Naive thymus-derived CD4-positive, alpha-beta T cell (primary cell): ENCODE measurements at regions of chr12 and their contacts with region 1.

Region 1: DNA sequence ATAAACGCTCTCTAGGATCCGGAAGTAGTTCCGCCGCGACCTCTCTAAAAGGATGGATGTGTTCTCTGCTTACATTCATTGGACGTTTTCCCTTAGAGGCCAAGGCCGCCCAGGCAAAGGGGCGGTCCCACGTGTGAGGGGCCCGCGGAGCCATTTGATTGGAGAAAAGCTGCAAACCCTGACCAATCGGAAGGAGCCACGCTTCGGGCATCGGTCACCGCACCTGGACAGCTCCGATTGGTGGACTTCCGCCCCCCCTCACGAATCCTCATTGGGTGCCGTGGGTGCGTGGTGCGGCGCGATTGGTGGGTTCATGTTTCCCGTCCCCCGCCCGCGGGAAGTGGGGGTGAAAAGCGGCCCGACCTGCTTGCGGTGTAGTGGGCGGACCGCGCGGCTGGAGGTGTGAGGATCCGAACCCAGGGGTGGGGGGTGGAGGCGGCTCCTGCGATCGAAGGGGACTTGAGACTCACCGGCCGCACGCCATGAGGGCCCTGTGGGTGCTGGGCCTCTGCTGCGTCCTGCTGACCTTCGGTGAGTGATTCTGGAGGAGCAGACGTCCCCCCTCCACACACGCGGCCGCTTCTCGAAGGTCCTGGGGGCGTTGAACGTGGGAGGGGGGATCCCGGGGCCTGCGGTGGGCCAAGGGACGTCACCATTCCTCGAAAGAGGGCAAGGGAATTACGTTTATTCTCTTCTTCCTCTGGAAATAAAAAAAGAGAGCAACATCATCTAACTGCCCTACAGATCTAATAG is at the start of gene HSP90B1:
- DNase-seq: peak; percentile 95 to 100 (median 99)
- ATAC-seq: peak; percentile 84
- H3K4me3 ChIP-seq: peak within 1 kb of the TSS; percentile 76
- H3K4me3 Mint-ChIP-seq: peak within 1 kb of the TSS; percentile 84 to 99 (median 92)
- H3K27ac ChIP-seq: peak within 1 kb of the TSS; percentile 100
- H3K27ac Mint-ChIP-seq: peak within 1 kb of the TSS; percentile 97 to 100 (median 100)
- H3K4me1 ChIP-seq: peaks cover 36 to 45% of the 10 kb centered on the region in 2 donors
- H3K4me1 Mint-ChIP-seq: peaks cover 42 to 67% (median 53%) of the 10 kb centered on the region in 7 donors
- H3K27me3 ChIP-seq: no peaks in the 10 kb centered on the region
- H3K27me3 Mint-ChIP-seq: peaks cover 0 to 4% (median 0%) of the 10 kb centered on the region in 5 donors
- total RNA-seq, gene HSP90B1: 226 to 461 (median 436) TPM

Region 2: DNA sequence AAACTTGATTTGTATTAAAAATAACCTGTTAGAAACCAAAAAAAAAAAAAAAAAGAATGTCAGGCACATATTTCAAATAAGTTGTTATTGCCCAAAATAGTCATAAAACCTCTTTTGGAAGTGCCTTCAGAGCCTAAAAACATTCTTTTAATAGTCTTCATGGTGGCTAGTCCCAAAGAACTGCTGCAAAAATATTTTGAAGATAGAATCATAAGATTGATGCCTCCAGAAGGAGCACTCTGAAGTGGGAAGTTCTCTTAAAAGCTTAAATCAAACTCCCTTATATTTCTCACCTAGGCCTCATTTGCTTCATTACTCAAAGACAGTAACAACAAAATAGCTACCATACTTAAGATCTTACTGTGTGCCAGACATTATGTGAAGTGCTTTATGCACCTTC is 62.0 kb before region 1 on chr12:
- CTCF ChIA-PET with region 1: no interaction called
- POLR2A ChIA-PET with region 1: no interaction called
- intact Hi-C with region 1: no loop called
- DNase-seq: no peak
- ATAC-seq: no peak
- H3K4me3 ChIP-seq: no peak overlapping the region
- H3K4me3 Mint-ChIP-seq: no peak overlapping the region
- H3K27ac ChIP-seq: no peak overlapping the region
- H3K27ac Mint-ChIP-seq: no peak overlapping the region
- H3K4me1 ChIP-seq: no peaks in the 10 kb centered on the region
- H3K4me1 Mint-ChIP-seq: no peaks in the 10 kb centered on the region
- H3K27me3 ChIP-seq: no peaks in the 10 kb centered on the region
- H3K27me3 Mint-ChIP-seq: peaks cover 0 to 24% (median 5%) of the 10 kb centered on the region in 5 donors

Region 3: DNA sequence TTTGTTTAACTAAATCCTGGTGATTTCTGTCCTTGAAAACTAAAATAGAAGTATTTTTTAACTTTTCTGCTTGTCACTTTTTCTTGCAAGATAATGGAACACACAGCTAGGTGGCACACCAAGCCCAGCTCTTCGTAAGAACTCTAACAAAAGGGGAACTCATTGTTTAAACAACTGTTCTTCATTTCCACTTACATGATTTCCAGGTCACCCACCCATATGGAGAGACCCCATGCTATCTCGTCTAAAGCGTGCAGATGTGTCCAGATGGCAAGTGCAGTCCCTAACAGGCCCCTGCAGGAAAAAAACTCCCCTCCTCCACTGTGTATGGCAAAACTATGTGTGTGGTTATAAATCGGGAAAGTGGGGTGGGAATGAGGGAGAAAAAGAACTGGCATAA is 45.9 kb before region 1 on chr12:
- CTCF ChIA-PET with region 1: interaction called, 18 read pairs
- POLR2A ChIA-PET with region 1: interaction called, 23 read pairs
- intact Hi-C with region 1: loop called (anchors 1 kb)
- DNase-seq: peak in 7 of 9 donors; percentile 36 to 68 (median 53)
- ATAC-seq: peak; percentile 68
- H3K4me3 ChIP-seq: no peak overlapping the region
- H3K4me3 Mint-ChIP-seq: peak overlapping the region in 3 of 10 donors; percentile 30 to 64 (median 39)
- H3K27ac ChIP-seq: no peak overlapping the region
- H3K27ac Mint-ChIP-seq: peak overlapping the region in 6 of 9 donors; percentile 19 to 74 (median 46)
- H3K4me1 ChIP-seq: no peaks in the 10 kb centered on the region
- H3K4me1 Mint-ChIP-seq: peaks cover 4 to 24% (median 16%) of the 10 kb centered on the region in 7 donors
- H3K27me3 ChIP-seq: no peaks in the 10 kb centered on the region
- H3K27me3 Mint-ChIP-seq: no peaks in the 10 kb centered on the region

Region 4: DNA sequence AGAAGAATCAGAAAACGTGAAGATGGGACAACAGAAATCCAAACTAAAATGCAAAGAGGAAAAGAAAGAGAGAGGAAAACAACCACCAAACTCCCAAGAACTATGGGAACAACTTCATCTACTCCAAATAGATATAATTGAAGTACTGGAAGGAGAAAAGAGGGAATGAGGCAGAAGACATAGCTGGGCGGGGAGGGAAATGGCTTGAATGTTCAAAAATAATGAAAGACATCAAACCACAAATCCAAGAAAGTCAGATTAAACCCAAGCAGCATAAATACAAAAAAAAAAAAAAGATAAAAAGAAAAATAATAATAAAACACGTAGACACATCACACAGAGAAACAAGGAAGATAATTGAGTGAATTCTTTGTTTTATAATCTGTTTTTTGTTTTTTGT is 12.3 kb before region 1 on chr12:
- CTCF ChIA-PET with region 1: interaction called, 4 read pairs
- POLR2A ChIA-PET with region 1: interaction called, 13 read pairs
- intact Hi-C with region 1: no loop called
- DNase-seq: no peak
- ATAC-seq: no peak
- H3K4me3 ChIP-seq: no peak overlapping the region
- H3K4me3 Mint-ChIP-seq: no peak overlapping the region
- H3K27ac ChIP-seq: no peak overlapping the region
- H3K27ac Mint-ChIP-seq: peak overlapping the region in 1 of 9 donors; percentile 59
- H3K4me1 ChIP-seq: no peaks in the 10 kb centered on the region
- H3K4me1 Mint-ChIP-seq: peaks cover 0 to 3% (median 0%) of the 10 kb centered on the region in 7 donors
- H3K27me3 ChIP-seq: no peaks in the 10 kb centered on the region
- H3K27me3 Mint-ChIP-seq: peaks cover 0 to 5% (median 0%) of the 10 kb centered on the region in 5 donors

Region 5: GRCh38 chr12:104064031-104064822 is 134.0 kb after region 1 on chr12 and contains the start of gene HCFC2:
- CTCF ChIA-PET with region 1: no interaction called
- POLR2A ChIA-PET with region 1: interaction called, 16 read pairs
- intact Hi-C with region 1: loop called (anchors 1 kb)
- DNase-seq: peak; percentile 77 to 93 (median 83)
- ATAC-seq: peak; percentile 99
- H3K4me3 ChIP-seq: peak within 1 kb of the TSS; percentile 95
- H3K4me3 Mint-ChIP-seq: peak within 1 kb of the TSS; percentile 88 to 97 (median 94)
- H3K27ac ChIP-seq: peak within 1 kb of the TSS; percentile 79
- H3K27ac Mint-ChIP-seq: peak within 1 kb of the TSS; percentile 71 to 96 (median 90)
- H3K4me1 ChIP-seq: peaks cover 5 to 9% of the 10 kb centered on the region in 2 donors
- H3K4me1 Mint-ChIP-seq: peaks cover 13 to 31% (median 21%) of the 10 kb centered on the region in 7 donors
- H3K27me3 ChIP-seq: no peaks in the 10 kb centered on the region
- H3K27me3 Mint-ChIP-seq: peaks cover 5 to 27% (median 13%) of the 10 kb centered on the region in 5 donors
- total RNA-seq, gene HCFC2: 11.4 to 20.2 (median 16.2) TPM

Region 6: DNA sequence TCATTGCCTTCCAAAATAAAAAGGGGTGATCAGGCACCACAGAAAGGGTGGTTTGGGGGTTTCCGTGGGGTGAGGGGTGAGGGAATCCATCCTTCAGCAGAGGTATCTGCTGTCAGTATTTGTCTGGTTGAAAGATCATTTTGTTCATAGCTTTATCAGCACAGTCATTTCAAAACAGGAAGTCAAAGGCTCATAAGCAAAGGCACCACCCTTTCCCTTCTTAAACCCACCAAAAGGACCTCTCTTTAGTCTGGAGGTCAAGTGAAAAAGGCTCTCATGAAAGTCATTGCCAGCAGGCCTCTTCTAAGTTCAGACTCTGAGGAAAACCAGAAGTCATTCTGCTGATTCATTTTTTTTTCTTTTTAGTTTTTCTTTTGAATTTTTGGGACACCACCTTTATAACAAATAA is 532.7 kb after region 1 on chr12:
- CTCF ChIA-PET with region 1: no interaction called
- POLR2A ChIA-PET with region 1: no interaction called
- intact Hi-C with region 1: loop called in 1 of 2 experiments (anchors 5 kb)
- DNase-seq: peak in 7 of 9 donors; percentile 41 to 68 (median 51)
- ATAC-seq: peak; percentile 71
- H3K4me3 ChIP-seq: peak overlapping the region; percentile 12
- H3K4me3 Mint-ChIP-seq: peak overlapping the region; percentile 68 to 90 (median 85)
- H3K27ac ChIP-seq: peak overlapping the region; percentile 68
- H3K27ac Mint-ChIP-seq: peak overlapping the region; percentile 63 to 98 (median 93)
- H3K4me1 ChIP-seq: peaks cover 76 to 77% of the 10 kb centered on the region in 2 donors
- H3K4me1 Mint-ChIP-seq: peaks cover 60 to 93% (median 78%) of the 10 kb centered on the region in 7 donors
- H3K27me3 ChIP-seq: no peaks in the 10 kb centered on the region
- H3K27me3 Mint-ChIP-seq: no peaks in the 10 kb centered on the region

Region 7: GRCh38 chr12:104986022-104986941 is 1056.1 kb after region 1 on chr12 and contains the start of gene NOPCHAP1:
- CTCF ChIA-PET with region 1: no interaction called
- POLR2A ChIA-PET with region 1: no interaction called
- intact Hi-C with region 1: no loop called
- DNase-seq: peak; percentile 64 to 84 (median 78)
- ATAC-seq: peak; percentile 100
- H3K4me3 ChIP-seq: peak within 1 kb of the TSS; percentile 91
- H3K4me3 Mint-ChIP-seq: peak within 1 kb of the TSS; percentile 90 to 95 (median 94)
- H3K27ac ChIP-seq: peak within 1 kb of the TSS; percentile 73
- H3K27ac Mint-ChIP-seq: peak within 1 kb of the TSS; percentile 63 to 87 (median 74)
- H3K4me1 ChIP-seq: peaks cover 12 to 13% of the 10 kb centered on the region in 2 donors
- H3K4me1 Mint-ChIP-seq: peaks cover 19 to 47% (median 37%) of the 10 kb centered on the region in 7 donors
- H3K27me3 ChIP-seq: no peaks in the 10 kb centered on the region
- H3K27me3 Mint-ChIP-seq: peaks cover 0 to 13% (median 5%) of the 10 kb centered on the region in 5 donors
- total RNA-seq, gene NOPCHAP1: 10.5 to 18.0 (median 15.2) TPM